Breast epithelium (tissue), 4 donors: ENCODE measurements at regions of chr7 and their contacts with region 1.

Region 1: DNA sequence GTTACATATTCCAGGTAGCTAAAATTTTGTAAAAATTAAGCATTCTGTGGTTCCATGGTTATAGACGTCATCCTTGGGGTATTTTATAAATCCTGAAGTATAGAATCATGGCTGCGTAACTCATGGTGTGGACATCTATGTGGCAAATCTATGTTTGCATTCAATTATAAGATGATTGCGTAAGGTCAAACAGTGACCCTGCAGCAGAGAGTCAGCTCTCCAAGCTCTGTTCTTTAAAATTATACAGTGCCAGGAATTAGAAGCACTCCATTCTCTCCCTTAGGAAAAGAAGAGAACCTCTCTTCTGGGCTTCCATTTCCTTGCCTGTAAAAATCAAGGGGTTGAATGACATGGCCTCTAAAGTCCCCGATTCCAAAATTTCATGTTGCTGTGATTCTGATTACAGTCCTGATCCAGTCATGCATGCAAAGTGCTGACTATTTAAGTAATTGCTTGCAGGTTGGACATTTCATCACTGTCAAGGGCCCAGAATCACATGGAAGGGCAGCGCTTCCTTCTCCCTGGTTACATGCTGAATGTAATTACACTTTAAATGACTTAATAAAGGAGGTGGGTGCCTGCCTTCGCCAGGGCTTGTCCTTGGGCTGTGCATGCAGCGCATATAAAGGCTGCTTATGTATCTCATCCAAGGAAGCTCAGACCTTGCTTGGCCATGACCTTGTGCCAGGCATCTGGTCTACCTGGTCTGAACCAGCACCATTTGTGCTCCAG is 550.7 kb downstream of the TYW1 start:
- DNase-seq: no peak
- H3K4me3 ChIP-seq: no peak overlapping the region
- H3K27ac ChIP-seq: no peak overlapping the region
- H3K4me1 ChIP-seq: no peaks in the 10 kb centered on the region
- H3K27me3 ChIP-seq: no peaks in the 10 kb centered on the region
- CTCF ChIP-seq: no peak
- POLR2A ChIP-seq: no peak

Region 2: GRCh38 chr7:67771846-67772605 is 224.7 kb after region 1 on chr7:
- intact Hi-C with region 1: no loop called
- DNase-seq: no peak
- H3K4me3 ChIP-seq: no peak overlapping the region
- H3K27ac ChIP-seq: no peak overlapping the region
- H3K4me1 ChIP-seq: no peaks in the 10 kb centered on the region
- H3K27me3 ChIP-seq: no peaks in the 10 kb centered on the region
- CTCF ChIP-seq: no peak
- POLR2A ChIP-seq: no peak

Region 3: DNA sequence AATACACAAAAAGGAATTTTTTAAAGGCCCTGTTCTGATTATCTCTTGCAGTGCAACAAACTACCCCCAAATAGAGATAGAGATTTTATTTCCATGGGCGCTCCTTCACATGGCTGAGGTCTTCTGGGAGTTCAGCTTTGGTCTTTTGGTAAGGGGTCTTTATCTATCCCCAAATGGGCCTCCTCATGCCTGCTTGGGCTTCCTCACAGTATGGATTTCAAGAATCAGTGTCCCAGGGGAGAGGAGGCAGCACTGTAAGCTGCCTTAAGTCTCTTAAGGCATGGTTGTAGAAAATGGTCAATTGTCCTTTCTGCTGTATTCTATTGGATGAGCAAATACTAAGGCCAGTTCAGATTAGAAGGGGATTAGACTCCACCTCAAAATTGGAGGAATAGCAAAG is 415.5 kb after region 1 on chr7:
- intact Hi-C with region 1: loop called (anchors 5 kb)
- DNase-seq: no peak
- H3K4me3 ChIP-seq: no peak overlapping the region
- H3K27ac ChIP-seq: no peak overlapping the region
- H3K4me1 ChIP-seq: no peaks in the 10 kb centered on the region
- H3K27me3 ChIP-seq: no peaks in the 10 kb centered on the region
- CTCF ChIP-seq: no peak
- POLR2A ChIP-seq: no peak

Region 4: DNA sequence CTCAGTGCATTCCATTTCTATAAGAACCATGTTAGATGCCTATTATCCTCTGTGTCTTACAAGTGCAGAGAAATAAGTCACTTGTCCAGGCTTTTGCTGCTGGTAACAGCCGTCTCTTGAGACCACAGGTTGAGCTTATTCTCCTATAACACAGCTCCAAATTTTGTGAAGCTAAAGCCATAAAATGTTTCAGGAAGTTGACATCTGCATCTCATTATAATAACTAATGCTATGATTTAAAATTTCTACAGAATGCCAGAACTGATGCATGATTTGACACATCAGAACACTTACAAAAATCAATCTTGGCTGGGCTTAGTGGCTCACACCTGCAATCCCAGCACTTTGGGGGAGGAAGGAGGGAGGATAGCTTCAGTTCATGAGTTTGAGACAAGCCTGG is 436.1 kb after region 1 on chr7:
- intact Hi-C with region 1: no loop called
- DNase-seq: no peak
- H3K4me3 ChIP-seq: no peak overlapping the region
- H3K27ac ChIP-seq: no peak overlapping the region
- H3K4me1 ChIP-seq: no peaks in the 10 kb centered on the region
- H3K27me3 ChIP-seq: no peaks in the 10 kb centered on the region
- CTCF ChIP-seq: no peak
- POLR2A ChIP-seq: no peak